T-cell (primary cell): ENCODE measurements at regions of chr14 and their contacts with region 1.

Region 1: GRCh38 chr14:91839749-91840148 is 27.6 kb downstream of the TC2N start:
- DNase-seq: peak in 4 of 35 experiments; percentile 8 to 30 (median 21)
- ATAC-seq: no peak
- H3K4me3 ChIP-seq: no peak overlapping the region
- H3K4me3 Mint-ChIP-seq: no peak overlapping the region
- H3K27ac ChIP-seq: no peak overlapping the region
- H3K27ac Mint-ChIP-seq: peak overlapping the region; percentile 56 to 73
- H3K4me1 ChIP-seq: peaks cover 23 to 40% of the 10 kb centered on the region in 2 experiments
- H3K4me1 Mint-ChIP-seq: peaks cover 84 to 90% (median 88%) of the 10 kb centered on the region in 3 donors
- H3K27me3 ChIP-seq: no peaks in the 10 kb centered on the region
- H3K27me3 Mint-ChIP-seq: no peaks in the 10 kb centered on the region

Region 2: DNA sequence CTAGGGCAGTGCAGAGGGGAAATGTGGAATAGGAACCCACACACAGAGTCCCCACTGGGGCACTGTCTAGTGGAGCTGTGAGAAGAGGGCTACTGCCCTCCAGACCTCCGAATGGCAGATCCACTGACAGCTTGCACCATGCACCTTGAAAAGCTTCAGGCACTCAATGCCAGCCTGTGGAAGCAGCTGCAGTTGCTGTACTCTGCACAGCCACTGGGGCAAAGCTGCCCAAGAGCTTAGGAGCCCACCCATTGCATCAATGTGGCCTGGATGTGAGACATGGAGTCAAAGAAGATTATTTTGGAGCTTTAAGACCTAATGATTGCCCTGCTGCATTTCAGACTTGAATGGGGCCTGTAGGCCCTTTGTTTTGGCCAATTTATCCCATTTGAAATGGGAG is 400.4 kb before region 1 on chr14:
- CTCF ChIA-PET with region 1: no interaction called
- POLR2A ChIA-PET with region 1: interaction called in 1 of 2 experiments, 13 read pairs
- DNase-seq: no peak
- ATAC-seq: no peak
- H3K4me3 ChIP-seq: no peak overlapping the region
- H3K4me3 Mint-ChIP-seq: no peak overlapping the region
- H3K27ac ChIP-seq: no peak overlapping the region
- H3K27ac Mint-ChIP-seq: no peak overlapping the region
- H3K4me1 ChIP-seq: no peaks in the 10 kb centered on the region
- H3K4me1 Mint-ChIP-seq: no peaks in the 10 kb centered on the region
- H3K27me3 ChIP-seq: peaks cover 0 to 5% of the 10 kb centered on the region in 2 experiments
- H3K27me3 Mint-ChIP-seq: peaks cover 0 to 1% of the 10 kb centered on the region in 2 donors

Region 3: GRCh38 chr14:91980127-91980741 is 140.5 kb after region 1 on chr14:
- CTCF ChIA-PET with region 1: no interaction called
- POLR2A ChIA-PET with region 1: no interaction called
- DNase-seq: no peak
- ATAC-seq: peak in 3 of 4 experiments; percentile 58 to 67 (median 65)
- H3K4me3 ChIP-seq: no peak overlapping the region
- H3K4me3 Mint-ChIP-seq: no peak overlapping the region
- H3K27ac ChIP-seq: no peak overlapping the region
- H3K27ac Mint-ChIP-seq: peak overlapping the region; percentile 13 to 36
- H3K4me1 ChIP-seq: no peaks in the 10 kb centered on the region
- H3K4me1 Mint-ChIP-seq: peaks cover 12 to 24% (median 15%) of the 10 kb centered on the region in 3 donors
- H3K27me3 ChIP-seq: no peaks in the 10 kb centered on the region
- H3K27me3 Mint-ChIP-seq: no peaks in the 10 kb centered on the region

Region 4: GRCh38 chr14:92173668-92174067 is 333.9 kb after region 1 on chr14:
- CTCF ChIA-PET with region 1: no interaction called
- POLR2A ChIA-PET with region 1: no interaction called
- DNase-seq: no peak
- ATAC-seq: no peak
- H3K4me3 ChIP-seq: no peak overlapping the region
- H3K4me3 Mint-ChIP-seq: no peak overlapping the region
- H3K27ac ChIP-seq: no peak overlapping the region
- H3K27ac Mint-ChIP-seq: no peak overlapping the region
- H3K4me1 ChIP-seq: no peaks in the 10 kb centered on the region
- H3K4me1 Mint-ChIP-seq: no peaks in the 10 kb centered on the region
- H3K27me3 ChIP-seq: no peaks in the 10 kb centered on the region
- H3K27me3 Mint-ChIP-seq: no peaks in the 10 kb centered on the region